ENCODE measurements at regions of chr19 and their contacts with region 1.

Region 1: DNA sequence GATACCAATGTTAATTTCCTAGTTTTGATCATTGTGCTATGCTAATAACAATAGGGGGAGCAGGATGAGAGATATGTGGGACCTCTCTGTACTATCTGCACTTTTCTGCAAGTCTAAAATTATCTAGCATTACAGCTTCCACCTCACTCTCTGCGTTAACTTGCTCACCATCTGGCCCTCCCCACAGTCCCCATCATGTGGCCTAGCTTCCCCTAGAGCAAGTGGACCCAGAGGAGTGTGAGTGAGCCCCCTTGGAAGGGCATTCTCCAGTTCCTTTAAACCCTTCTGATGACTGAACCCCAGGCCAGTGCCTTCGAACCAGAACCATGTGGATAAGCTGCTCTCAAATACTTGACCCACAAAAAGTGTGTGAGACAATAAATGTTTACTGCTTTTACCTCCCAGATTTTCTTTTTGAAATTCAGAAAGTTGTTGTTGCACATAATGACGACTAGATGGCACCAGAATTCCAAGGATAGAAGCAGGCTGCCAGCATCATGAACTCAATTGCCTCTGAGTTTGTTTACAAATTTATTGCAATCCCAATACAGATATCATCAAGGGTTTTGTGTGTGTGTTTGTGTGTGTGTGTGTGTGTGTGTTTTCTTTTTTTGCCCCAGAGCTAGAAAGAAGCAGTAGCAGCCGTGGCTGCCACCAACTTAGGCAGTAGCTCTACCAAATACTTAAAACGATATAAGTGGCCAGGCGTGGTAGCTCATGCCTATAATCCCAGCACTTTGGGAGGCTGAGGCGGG is 49.0 kb upstream of the ZNF780A start:
- DNase-seq: peak; percentile 77 to 79
- ATAC-seq: peak; percentile 59 to 71
- H3K4me3 ChIP-seq: no peak overlapping the region
- H3K27ac ChIP-seq: no peak overlapping the region
- H3K4me1 ChIP-seq: no peaks in the 10 kb centered on the region
- CTCF ChIP-seq: peak; percentile 99
- EP300 ChIP-seq: no peak
- POLR2A ChIP-seq: no peak
- RAD21 ChIP-seq: peak; percentile 100

Region 2: DNA sequence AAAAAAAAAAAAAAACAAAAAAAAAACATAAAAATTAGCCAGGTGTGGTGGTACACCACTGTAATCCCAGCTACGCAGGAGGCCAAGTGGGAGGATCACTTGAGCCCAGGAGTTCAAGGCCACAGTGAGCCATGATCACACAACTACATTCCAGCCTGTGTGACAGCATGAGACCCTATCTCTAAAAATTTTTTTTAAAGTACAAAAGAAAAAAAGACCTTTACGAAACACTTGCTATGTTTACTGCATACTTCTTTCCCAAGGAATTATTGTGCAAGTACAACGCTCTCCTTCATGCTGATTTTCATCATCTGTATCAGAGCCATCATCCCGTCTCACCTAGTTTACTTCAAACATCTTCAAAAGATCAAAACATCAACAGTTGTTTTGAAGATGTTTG is 20.3 kb before region 1 on chr19:
- CTCF ChIA-PET with region 1: interaction called, 12 read pairs
- POLR2A ChIA-PET with region 1: no interaction called
- DNase-seq: no peak
- ATAC-seq: no peak
- H3K4me3 ChIP-seq: no peak overlapping the region
- H3K27ac ChIP-seq: no peak overlapping the region
- H3K4me1 ChIP-seq: no peaks in the 10 kb centered on the region
- CTCF ChIP-seq: no peak
- EP300 ChIP-seq: no peak
- POLR2A ChIP-seq: no peak
- RAD21 ChIP-seq: no peak

Region 3: GRCh38 chr19:40165362-40165937 is 25.7 kb after region 1 on chr19:
- CTCF ChIA-PET with region 1: interaction called, 86 read pairs
- POLR2A ChIA-PET with region 1: no interaction called
- DNase-seq: peak in 1 of 2 experiments; percentile 77
- ATAC-seq: peak; percentile 71 to 83
- H3K4me3 ChIP-seq: no peak overlapping the region
- H3K27ac ChIP-seq: no peak overlapping the region
- H3K4me1 ChIP-seq: no peaks in the 10 kb centered on the region
- CTCF ChIP-seq: peak; percentile 61
- EP300 ChIP-seq: no peak
- POLR2A ChIP-seq: no peak
- RAD21 ChIP-seq: peak; percentile 53 to 64; a peak in 4 of 5 replicates

Region 4: GRCh38 chr19:40200341-40201099 is 60.8 kb after region 1 on chr19:
- CTCF ChIA-PET with region 1: interaction called, 24 read pairs
- POLR2A ChIA-PET with region 1: no interaction called
- DNase-seq: no peak
- ATAC-seq: peak in 1 of 2 experiments; percentile 34; a peak in 2 of 6 replicates
- H3K4me3 ChIP-seq: no peak overlapping the region
- H3K27ac ChIP-seq: no peak overlapping the region
- H3K4me1 ChIP-seq: no peaks in the 10 kb centered on the region
- CTCF ChIP-seq: no peak
- EP300 ChIP-seq: no peak
- POLR2A ChIP-seq: no peak
- RAD21 ChIP-seq: no peak

Region 5: DNA sequence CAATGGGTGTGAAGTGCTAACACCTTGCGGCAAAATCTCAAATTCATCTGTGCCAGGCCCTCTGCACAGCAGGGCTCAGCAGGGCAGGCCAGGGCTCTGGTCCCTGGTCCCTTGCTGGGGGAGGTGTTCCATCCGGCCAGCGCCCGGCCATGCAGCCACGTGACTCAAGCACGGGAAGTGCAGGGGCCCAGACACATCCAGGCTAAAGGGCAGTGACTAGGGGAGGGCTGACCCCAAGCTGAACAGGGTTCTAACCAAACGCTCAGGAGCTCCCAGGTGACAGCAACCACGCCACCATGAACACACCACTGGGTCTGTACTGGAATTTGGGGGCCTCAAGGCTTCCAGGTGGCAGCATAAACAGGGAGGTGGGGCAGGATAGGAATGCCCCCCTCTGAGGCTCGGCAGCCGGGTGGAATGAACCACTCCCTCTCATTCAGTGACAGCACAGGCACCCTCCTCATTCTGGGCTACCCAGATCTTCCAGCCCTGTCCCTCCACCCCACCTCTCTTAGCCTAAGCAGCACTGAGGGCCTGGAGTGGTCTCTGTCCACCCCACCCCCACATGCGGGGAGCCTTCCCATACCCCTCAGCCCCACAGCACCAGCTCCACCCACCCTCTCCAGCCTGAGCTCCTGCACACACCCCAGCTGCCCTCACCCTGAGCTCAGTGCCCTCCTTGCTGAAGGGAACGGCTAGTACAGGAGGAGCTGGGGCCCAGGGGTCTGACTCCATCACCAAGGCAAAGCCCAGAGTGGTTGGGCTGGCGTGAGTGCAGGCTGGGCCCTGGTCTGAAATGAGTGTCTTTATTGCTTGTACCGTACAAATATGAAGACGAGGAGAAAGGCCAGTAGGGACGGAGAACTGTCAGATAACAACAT is 92.1 kb after region 1 on chr19:
- CTCF ChIA-PET with region 1: interaction called, 37 read pairs
- POLR2A ChIA-PET with region 1: no interaction called
- DNase-seq: no peak
- ATAC-seq: peak; percentile 11 to 50; a peak in 5 of 6 replicates
- H3K4me3 ChIP-seq: no peak overlapping the region
- H3K27ac ChIP-seq: peak overlapping the region; percentile 43 to 71; a peak in 5 of 6 replicates
- H3K4me1 ChIP-seq: peaks cover 36% of the 10 kb centered on the region
- CTCF ChIP-seq: no peak
- EP300 ChIP-seq: no peak
- POLR2A ChIP-seq: no peak
- RAD21 ChIP-seq: no peak

Region 6: DNA sequence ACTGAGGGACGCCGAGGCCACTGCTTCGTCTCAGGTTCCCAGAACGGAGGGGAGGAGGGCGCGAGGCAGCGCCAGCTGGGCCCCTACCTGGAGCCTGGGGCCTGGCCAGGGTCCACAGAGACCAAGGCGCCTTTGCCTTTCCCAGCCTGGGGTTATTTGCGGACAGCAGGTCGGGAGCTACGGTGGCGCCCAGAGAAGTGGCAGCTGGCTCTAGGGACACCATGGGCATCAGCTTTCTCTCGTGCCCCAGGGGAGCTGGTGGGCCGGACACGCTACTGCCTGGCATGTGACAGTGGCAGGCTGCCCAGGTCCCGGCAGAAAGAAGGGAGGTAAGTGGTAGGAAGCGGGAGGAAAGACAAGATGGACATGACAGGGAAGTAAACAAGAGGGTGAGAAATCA is 126.4 kb after region 1 on chr19:
- CTCF ChIA-PET with region 1: interaction called, 16 read pairs
- POLR2A ChIA-PET with region 1: no interaction called
- DNase-seq: no peak
- ATAC-seq: no peak
- H3K4me3 ChIP-seq: no peak overlapping the region
- H3K27ac ChIP-seq: no peak overlapping the region
- H3K4me1 ChIP-seq: no peaks in the 10 kb centered on the region
- CTCF ChIP-seq: no peak
- EP300 ChIP-seq: no peak
- POLR2A ChIP-seq: no peak
- RAD21 ChIP-seq: no peak

Measured in A549 (cell line).